GM12878 (cell line): ENCODE measurements at regions of chr2 and their contacts with region 1.

Region 1: GRCh38 chr2:95076784-95077529 is 44.7 kb downstream of the MRPS5 start:
- DNase-seq: no peak
- ATAC-seq: peak; percentile 93
- H3K4me3 ChIP-seq: peak overlapping the region; percentile 28; the same call in 1 of the 2 replicates
- H3K27ac ChIP-seq: no peak overlapping the region
- H3K4me1 ChIP-seq: peaks cover 14% of the 10 kb centered on the region
- H3K27me3 ChIP-seq: no peaks in the 10 kb centered on the region; a peak in 2 of 4 replicates
- CTCF ChIP-seq: peak; percentile 76 to 91 (median 84)
- EP300 ChIP-seq: no peak
- POLR2A ChIP-seq: peak; percentile 30; the same call in 1 of the 2 replicates
- RAD21 ChIP-seq: peak; percentile 56

Region 2: GRCh38 chr2:94986392-94986963 is 90.5 kb before region 1 on chr2:
- CTCF ChIA-PET with region 1: interaction called, 41 read pairs
- POLR2A ChIA-PET with region 1: no interaction called
- RAD21 ChIA-PET with region 1: interaction called, 16 read pairs
- SMC1A ChIA-PET with region 1: interaction called, 14 read pairs
- in situ Hi-C with region 1: no loop called
- intact Hi-C with region 1: no loop called
- DNase-seq: peak; percentile 2
- ATAC-seq: peak; percentile 94
- H3K4me3 ChIP-seq: no peak overlapping the region
- H3K27ac ChIP-seq: no peak overlapping the region
- H3K4me1 ChIP-seq: no peaks in the 10 kb centered on the region
- H3K27me3 ChIP-seq: no peaks in the 10 kb centered on the region; a peak in 1 of 4 replicates
- CTCF ChIP-seq: peak; percentile 69 to 80 (median 75)
- EP300 ChIP-seq: no peak
- POLR2A ChIP-seq: no peak
- RAD21 ChIP-seq: peak; percentile 60

Region 3: DNA sequence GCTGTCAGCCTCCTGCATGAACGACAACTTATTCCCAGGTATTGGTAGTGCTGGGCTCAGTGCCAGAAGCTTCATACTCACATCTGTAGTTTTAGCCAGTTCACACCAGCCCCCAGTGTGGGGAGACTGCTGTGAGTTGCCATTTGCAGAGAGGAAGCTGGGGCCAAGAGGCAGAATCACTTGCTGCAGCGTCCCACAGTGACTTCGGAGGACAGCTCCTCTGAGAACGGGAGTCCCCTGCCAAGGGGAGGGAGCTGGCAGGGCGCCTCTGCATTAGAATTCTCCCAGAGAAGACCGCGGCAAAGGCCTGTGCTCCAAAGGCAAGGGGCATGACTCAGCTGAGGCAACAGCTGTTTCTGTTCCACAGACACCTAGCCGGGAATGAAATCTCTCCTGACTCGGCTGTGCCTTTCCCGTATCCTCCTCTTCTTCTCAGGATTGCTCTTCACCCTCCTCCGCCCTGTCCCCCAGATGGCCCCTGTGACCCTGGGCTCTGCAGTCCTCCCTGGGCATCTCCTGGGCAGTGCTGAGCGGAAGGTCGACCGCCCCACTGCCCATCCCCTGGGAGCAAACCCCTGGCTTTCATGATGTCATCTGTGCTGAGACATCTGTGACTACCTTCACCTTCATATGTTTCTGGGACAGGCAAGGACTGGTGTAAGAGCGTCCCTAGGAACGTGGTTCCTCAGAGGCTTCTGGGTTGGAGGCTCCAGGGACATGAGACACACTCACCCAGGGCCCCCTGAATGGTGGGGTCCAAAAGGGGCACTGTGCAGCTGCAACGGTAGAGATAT is 33.5 kb before region 1 on chr2:
- CTCF ChIA-PET with region 1: interaction called, 9 read pairs
- POLR2A ChIA-PET with region 1: interaction called, 4 read pairs
- RAD21 ChIA-PET with region 1: interaction called, 26 read pairs
- SMC1A ChIA-PET with region 1: interaction called, 9 read pairs
- in situ Hi-C with region 1: no loop called
- intact Hi-C with region 1: loop called (anchors 5 kb)
- DNase-seq: peak; percentile 75
- ATAC-seq: peak; percentile 67
- H3K4me3 ChIP-seq: no peak overlapping the region
- H3K27ac ChIP-seq: peak overlapping the region; percentile 51
- H3K4me1 ChIP-seq: peaks cover 48% of the 10 kb centered on the region
- H3K27me3 ChIP-seq: no peaks in the 10 kb centered on the region
- CTCF ChIP-seq: no peak; a peak in 1 of 6 replicates
- EP300 ChIP-seq: no peak
- POLR2A ChIP-seq: no peak
- RAD21 ChIP-seq: no peak

Region 4: DNA sequence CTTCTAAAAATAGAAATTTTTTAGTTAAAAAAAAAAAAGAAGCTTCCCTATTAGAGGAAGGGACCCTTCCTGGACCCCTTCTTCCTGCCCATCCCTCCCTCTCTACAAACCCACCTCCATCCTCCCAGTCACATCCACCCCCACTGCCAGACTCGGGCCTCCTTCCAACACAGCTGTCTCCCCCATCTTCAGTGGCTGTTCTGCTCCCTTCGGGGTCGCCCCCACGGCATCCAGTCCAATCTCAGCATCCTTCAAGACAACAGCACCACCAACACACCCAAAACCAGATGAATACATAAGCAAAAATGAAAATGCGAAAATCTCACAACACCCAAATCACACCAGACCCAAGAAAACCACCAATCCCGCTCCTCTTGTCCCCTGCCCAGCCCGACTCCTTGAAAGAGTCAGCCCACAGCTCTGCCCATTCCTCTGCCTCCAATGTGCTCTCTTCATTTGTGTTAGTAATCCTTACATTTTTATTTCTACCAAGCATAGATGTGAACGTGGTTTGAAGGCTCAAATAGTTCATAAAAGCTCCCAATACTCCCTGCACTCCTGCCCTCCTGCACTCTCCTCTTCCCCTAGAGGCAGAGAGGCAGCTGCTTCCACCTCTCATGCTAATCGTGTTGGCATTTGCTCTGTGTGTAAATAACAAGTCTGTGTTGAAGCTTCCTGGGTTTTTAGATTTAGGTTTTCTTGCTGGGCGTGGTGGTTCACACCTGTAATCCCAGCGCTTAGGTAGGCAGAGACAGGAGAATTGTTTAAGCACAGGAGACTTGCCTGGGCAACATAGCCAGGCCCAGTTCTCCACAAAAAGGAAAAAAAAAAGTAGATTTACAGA is 14.5 kb before region 1 on chr2:
- CTCF ChIA-PET with region 1: interaction called, 154 read pairs
- POLR2A ChIA-PET with region 1: interaction called, 10 read pairs
- RAD21 ChIA-PET with region 1: interaction called, 7 read pairs
- SMC1A ChIA-PET with region 1: interaction called, 24 read pairs
- in situ Hi-C with region 1: no loop called
- intact Hi-C with region 1: no loop called
- DNase-seq: no peak
- ATAC-seq: peak; percentile 59
- H3K4me3 ChIP-seq: no peak overlapping the region
- H3K27ac ChIP-seq: peak overlapping the region; percentile 84
- H3K4me1 ChIP-seq: peaks cover 27% of the 10 kb centered on the region
- H3K27me3 ChIP-seq: no peaks in the 10 kb centered on the region
- CTCF ChIP-seq: no peak
- EP300 ChIP-seq: 0 out of 4 replicates have a peak, but pooled peaks of 1 of the 2 experiments have one; percentile 9
- POLR2A ChIP-seq: no peak
- RAD21 ChIP-seq: no peak

Region 5: GRCh38 chr2:95115418-95115817 is 38.5 kb after region 1 on chr2:
- CTCF ChIA-PET with region 1: interaction called, 29 read pairs
- POLR2A ChIA-PET with region 1: no interaction called
- RAD21 ChIA-PET with region 1: interaction called, 13 read pairs
- SMC1A ChIA-PET with region 1: interaction called, 8 read pairs
- in situ Hi-C with region 1: no loop called
- intact Hi-C with region 1: loop called (anchors 2 kb)
- DNase-seq: peak; percentile 25
- ATAC-seq: peak; percentile 95
- H3K4me3 ChIP-seq: no peak overlapping the region
- H3K27ac ChIP-seq: no peak overlapping the region
- H3K4me1 ChIP-seq: peaks cover 15% of the 10 kb centered on the region
- H3K27me3 ChIP-seq: no peaks in the 10 kb centered on the region
- CTCF ChIP-seq: peak; percentile 77 to 90 (median 83)
- EP300 ChIP-seq: no peak
- POLR2A ChIP-seq: no peak
- RAD21 ChIP-seq: peak; percentile 82

Region 6: DNA sequence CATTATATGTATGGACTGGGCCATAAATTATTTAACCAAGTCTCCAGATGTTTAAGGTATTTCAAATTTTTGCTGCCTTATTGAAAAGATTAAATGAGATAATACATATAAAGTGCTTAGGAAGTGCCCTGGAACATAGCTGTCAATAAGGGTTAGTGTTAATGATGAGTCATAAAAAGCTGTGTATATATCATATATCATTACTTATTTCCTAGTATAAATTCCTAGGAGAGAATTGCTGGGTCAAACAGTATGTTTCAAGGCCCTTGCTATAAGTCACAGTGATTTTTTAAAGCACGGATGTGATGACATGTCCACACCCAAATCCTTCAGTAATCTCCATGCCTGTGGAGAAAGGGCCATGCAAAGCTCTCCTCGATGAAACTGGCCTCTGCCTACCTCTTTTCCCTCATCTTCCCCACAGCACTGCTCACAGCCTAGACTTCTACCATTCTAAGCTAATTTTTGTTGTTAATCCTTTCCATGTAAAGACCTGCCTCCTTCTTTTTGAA is 97.1 kb after region 1 on chr2:
- CTCF ChIA-PET with region 1: no interaction called
- POLR2A ChIA-PET with region 1: no interaction called
- RAD21 ChIA-PET with region 1: no interaction called
- SMC1A ChIA-PET with region 1: no interaction called
- in situ Hi-C with region 1: no loop called
- intact Hi-C with region 1: no loop called
- DNase-seq: no peak
- ATAC-seq: no peak
- H3K4me3 ChIP-seq: no peak overlapping the region
- H3K27ac ChIP-seq: no peak overlapping the region
- H3K4me1 ChIP-seq: no peaks in the 10 kb centered on the region
- H3K27me3 ChIP-seq: no peaks in the 10 kb centered on the region
- CTCF ChIP-seq: no peak
- EP300 ChIP-seq: no peak
- POLR2A ChIP-seq: no peak
- RAD21 ChIP-seq: no peak